Breast epithelium (tissue), 4 donors: ENCODE measurements at regions of chr11 and their contacts with region 1.

Region 1: DNA sequence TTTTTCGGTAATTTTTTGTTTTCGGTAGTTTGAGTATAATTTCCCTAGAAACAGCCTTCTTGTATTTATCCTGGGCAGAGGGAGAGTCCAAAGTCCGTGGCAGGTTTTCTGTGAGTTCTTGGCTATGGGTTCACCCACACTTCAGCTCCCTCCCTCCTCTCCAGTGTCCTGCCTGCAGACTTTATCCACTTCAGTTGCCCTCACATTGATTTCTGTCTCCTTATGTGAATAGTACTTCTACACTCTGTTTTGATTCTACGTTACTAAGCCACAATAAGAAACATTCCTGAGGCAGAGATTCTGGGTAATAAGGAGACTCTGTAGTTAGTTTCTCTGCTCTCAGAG is 868.6 kb downstream of the METTL15 start:
- DNase-seq: no peak
- H3K4me3 ChIP-seq: no peak overlapping the region
- H3K27ac ChIP-seq: no peak overlapping the region
- H3K4me1 ChIP-seq: no peaks in the 10 kb centered on the region
- H3K27me3 ChIP-seq: no peaks in the 10 kb centered on the region
- CTCF ChIP-seq: no peak
- POLR2A ChIP-seq: no peak

Region 2: DNA sequence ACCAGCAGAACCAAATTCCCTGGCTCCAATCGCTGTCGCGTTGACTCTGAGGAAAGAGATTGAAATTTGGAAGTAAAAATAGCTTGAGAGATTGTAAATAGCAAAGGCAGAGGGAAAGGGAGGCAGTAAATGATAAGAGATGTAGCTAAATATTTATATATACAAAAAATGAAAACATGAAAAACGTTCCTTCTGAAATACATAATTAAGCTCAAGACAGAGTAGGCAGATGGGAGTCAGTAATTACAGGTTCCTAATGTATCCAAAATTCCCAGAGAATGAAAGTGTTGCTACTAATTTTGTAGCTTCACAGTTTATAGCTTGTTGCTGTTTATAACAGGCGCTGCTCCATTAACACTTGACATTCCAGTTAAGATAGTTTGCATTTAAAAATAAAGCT is 391.4 kb after region 1 on chr11:
- intact Hi-C with region 1: loop called (anchors 5 kb)
- DNase-seq: no peak
- H3K4me3 ChIP-seq: no peak overlapping the region
- H3K27ac ChIP-seq: no peak overlapping the region
- H3K4me1 ChIP-seq: no peaks in the 10 kb centered on the region
- H3K27me3 ChIP-seq: no peaks in the 10 kb centered on the region
- CTCF ChIP-seq: no peak
- POLR2A ChIP-seq: no peak